ENCODE measurements at regions of chr1 and their contacts with region 1.

Region 1: DNA sequence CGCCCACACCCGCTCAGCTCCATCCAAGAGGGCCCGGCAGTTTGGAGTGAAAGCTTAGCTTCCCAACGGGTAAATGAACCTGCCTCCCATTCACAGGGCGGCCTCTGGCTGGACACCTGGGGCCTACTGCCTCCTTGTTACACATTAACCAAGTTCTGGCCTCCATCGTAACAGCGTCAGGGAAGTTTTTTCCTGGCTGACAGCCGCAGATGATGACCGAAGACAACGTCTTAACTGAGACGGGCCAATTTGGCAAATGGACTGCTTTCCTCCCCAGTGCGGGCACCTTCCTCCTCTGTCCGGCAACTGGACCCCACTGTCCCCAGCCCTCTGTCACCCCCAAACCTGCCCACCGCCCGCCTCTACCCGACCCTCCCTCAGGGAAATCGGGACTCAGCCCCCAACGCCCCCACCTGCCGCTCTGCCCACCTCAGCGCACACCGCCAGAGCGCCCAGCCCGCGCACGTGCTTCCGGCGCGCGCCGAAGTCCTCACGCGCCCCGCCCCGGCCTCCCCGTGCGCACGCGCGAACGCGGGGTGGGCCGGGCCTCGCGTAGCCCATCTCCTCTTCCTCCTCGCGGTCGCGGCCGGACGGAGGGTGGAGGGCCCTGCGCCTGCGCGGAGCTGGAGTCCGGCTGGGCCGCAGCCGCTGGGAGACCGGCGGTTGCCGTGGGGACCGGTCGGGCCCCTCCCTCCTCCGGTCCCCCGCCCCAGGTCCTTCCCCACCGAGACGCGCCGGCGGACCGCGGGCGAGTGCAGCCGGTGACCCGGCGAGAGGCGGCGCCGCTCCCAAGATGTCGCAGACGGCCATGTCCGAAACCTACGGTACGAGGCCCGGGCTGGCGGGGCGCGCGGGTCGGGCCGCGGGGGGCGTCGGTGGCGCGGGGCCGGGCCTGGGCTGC is at the start of gene RAB4A:
- DNase-seq: peak; percentile 78 to 98 (median 86)

Region 2: GRCh38 chr1:229341774-229342655 is 71.2 kb after region 1 on chr1:
- intact Hi-C with region 1: loop called (anchors 1 kb)
- DNase-seq: peak; percentile 86 to 99 (median 90)

Region 3: DNA sequence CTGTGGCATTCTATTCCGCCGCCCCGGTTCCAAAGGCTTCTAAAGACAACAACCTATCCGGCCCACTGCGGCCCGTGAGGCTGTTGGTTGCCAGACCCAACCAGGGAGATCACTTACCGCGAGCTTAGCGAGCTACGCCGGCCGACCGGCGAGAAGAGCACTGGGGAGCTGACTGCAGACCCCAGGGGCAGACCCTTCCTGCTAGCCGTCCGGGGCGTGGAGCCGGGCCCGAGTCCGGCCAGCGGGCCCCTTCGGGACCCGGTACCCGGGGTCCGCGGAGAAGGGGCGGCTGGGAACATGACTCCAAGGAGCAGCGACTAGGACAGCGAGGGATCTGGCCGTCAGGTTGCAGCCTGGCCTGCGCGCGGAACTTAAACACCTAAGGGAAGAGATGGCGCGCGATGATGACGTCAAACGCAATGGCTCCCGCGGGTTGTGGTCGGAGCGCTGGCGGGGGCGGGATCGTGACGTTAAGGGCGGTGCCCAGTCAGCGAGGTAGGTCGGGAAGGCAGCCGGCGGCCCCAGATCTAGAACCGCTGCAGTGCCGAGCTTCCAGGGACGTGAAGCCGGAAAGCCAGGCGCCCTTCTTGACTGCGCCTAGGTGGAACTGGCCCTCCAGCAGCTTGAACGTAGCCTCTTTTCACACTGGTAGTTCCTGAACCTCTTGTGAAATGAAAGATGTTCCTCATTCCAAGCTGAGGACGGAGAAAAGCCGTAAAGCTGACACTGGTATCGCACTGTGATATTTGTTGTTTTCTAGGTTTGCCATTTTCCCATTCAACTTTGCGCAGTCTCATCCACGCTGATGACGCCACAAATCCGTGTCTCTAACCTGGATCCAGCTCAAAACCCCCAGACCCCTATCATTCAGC is 237.4 kb after region 1 on chr1 and contains the start of gene NUP133:
- intact Hi-C with region 1: loop called (anchors 5 kb)
- DNase-seq: peak; percentile 95 to 100 (median 99)